ENCODE measurements at regions of chr1 and their contacts with region 1.

Region 1: DNA sequence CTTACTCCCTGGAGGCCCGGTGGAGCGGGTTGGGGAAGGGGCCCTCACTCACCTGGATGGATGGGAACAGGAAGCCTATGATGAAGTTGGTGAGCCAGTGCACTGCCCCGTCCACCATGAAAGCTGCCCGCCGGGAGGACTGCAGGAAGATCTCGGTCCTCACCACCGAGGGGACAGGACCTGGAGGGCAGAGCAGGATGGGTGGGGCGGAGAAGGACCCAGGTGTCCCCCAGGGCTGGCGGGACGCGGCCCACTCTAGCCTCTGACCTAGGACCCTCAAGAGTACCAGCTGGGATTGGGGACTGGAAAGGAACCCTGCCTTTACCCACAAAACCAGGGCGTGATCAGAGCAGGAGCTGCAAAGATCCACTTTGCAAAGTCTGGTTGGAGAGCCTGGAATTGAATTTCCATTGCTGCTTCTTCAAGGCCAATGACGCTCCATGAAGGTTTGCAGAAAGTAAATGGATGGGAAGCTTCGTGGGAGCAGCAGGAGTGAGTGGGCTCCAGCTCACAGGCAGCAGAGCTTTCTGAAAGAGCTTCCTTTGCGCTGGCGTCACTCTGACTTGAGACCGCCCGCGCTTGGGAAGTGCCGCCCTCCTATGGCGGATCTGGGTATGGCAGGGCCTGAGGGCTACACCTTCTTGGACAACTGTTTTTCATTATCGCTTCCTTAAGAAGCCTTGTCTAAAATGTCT is 21.4 kb downstream of the SLC2A7 start:
- DNase-seq: peak; percentile 40
- H3K4me3 ChIP-seq: no peak overlapping the region
- H3K27me3 ChIP-seq: no peaks in the 10 kb centered on the region; the same call in 1 of the 2 replicates
- CTCF ChIP-seq: peak; percentile 87

Region 2: DNA sequence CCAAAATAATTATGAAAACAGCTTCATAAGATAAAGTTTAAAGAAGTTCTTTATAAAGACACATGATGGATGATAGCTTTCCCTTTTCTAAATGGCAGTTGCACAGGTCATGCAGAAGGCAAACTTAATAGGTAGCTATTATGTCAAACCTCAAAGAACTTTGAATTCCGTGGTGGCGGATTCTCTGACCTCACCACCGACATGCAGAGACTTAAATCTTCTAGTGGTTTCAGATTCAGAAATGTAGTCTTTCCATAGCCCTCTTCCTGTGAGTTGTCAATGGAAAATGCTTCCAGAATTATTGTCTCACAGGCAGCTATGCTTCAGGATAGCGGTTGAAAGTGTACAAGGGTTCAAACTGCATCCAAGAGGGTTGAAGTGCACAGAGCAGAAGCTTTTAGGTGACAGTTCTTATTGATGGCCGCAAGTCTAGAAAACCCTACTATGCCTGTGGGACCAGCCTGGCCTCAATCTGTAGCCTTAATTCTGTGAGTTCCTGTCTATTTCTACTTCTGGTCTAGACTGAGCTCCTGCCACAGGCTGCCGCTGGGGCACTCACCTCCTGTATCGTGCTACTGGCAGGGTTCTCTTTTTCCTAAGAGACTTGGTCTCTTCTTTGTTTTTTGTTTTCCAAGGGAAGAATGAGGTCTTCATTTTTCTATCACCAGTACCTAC is 861.8 kb before region 1 on chr1:
- CTCF ChIA-PET with region 1: no interaction called
- POLR2A ChIA-PET with region 1: no interaction called
- DNase-seq: no peak
- H3K4me3 ChIP-seq: no peak overlapping the region
- H3K27me3 ChIP-seq: peaks cover 1% of the 10 kb centered on the region; the same call in 1 of the 2 replicates
- CTCF ChIP-seq: no peak

Region 3: GRCh38 chr1:8925406-8925805 is 79.4 kb before region 1 on chr1:
- CTCF ChIA-PET with region 1: interaction called, 40 read pairs
- POLR2A ChIA-PET with region 1: no interaction called
- DNase-seq: no peak
- H3K4me3 ChIP-seq: no peak overlapping the region
- H3K27me3 ChIP-seq: peaks cover 6% of the 10 kb centered on the region
- CTCF ChIP-seq: no peak

Region 4: DNA sequence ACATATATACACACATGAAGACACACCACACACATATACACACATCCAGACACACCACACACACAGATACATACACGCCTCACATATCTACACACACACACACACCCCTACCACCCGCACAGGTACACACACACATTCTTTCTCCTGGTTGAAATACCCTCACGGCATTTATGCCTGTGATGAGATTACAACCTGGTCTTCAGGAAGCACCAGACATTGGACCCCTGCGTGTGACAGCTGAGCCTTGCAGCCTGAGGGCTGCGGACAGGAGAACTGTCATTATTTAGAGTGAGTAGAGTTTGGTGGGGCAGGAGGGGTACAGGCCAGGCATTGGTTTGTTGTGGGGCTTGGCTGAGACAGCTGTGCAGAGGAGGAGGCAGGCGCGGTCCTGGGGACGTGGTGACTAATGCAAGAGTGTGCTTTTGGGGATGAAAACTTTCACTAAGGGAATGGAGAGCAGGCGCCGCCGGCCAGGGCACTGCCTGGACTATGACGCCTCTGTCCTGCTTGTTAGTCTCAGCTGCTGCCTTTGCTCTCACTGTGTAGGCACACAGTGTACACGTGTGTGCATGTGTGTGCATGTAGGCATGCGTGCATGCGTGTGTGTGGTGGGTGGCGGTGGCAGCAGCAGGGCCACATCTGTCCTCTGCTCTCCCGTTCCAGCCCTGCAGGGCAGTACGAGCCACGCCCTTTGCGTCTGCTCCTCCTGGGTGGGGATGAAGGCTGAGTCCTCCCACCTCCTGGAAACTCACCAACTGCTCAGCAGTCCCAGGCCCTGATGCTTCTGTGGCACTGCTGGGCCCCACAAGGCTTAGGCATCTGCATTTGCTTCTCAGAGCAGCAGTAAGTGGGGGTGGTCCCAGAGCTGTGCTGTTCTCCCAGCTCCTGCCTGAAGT is 345.4 kb after region 1 on chr1:
- CTCF ChIA-PET with region 1: no interaction called
- POLR2A ChIA-PET with region 1: no interaction called
- DNase-seq: peak; percentile 22
- H3K4me3 ChIP-seq: no peak overlapping the region
- H3K27me3 ChIP-seq: no peaks in the 10 kb centered on the region
- CTCF ChIP-seq: no peak

Region 5: DNA sequence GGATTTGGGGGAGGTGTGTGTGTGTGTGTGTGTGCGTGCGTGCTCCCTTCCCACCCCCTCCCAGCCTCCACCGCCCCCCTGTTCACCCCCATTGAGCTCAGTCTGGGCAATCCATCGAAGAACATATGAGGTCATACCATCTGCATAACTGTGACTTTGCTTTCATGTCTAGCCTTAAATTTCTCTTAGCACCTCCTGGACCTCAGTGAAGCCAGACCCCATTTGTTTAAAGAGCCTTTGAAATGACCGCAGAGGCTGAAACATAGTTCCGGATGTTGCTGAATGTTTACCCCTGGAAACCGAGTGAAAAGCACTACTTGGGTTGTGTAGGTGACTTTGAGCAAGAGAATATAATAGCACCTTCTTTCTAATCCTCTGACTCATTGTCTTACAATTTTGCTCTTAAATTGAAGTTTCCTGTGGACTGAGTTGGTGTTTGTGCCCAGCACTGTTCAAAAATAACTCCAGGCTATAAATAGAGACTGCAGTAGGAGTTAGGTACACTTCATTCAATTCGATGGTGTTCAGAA is 1103.4 kb after region 1 on chr1:
- CTCF ChIA-PET with region 1: no interaction called
- POLR2A ChIA-PET with region 1: no interaction called
- DNase-seq: peak; percentile 53
- H3K4me3 ChIP-seq: no peak overlapping the region
- H3K27me3 ChIP-seq: no peaks in the 10 kb centered on the region
- CTCF ChIP-seq: no peak